GM13976 (cell line): ENCODE measurements at regions of chrX and their contacts with region 1.

Region 1: GRCh38 chrX:134520860-134521390 is 61.0 kb downstream of the HPRT1 start:
- DNase-seq: peak; percentile 45
- CTCF ChIP-seq: peak; percentile 59

Region 2: GRCh38 chrX:134764212-134764785 is 243.4 kb after region 1 on chrX:
- in situ Hi-C with region 1: loop called (anchors 25 kb)
- DNase-seq: peak; percentile 32
- CTCF ChIP-seq: no peak